ENCODE measurements at regions of chr4 and their contacts with region 1.

Region 1: DNA sequence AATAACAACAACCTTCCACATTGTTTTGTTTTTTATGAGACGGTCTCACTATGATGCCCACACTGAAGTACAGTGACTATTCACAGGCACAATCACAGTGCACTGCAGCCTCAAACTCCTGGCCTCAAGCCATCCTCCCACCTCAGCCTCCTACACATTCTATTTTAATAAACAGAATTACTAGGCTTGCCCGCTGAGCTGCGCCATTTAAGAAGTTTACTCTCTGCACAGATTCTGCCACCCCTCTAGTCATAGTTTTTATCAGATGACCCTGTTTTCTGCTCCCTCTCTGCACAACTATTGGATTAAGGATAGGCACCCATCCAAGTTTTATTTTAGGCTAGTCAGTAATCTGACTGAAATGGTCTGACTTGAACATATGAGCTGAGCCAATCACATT is 11.3 kb upstream of the COX18 start:
- DNase-seq: no peak
- ATAC-seq: no peak
- H3K4me3 Mint-ChIP-seq: no peak overlapping the region
- H3K27ac Mint-ChIP-seq: peak overlapping the region; percentile 11
- H3K4me1 Mint-ChIP-seq: peaks cover 4% of the 10 kb centered on the region
- H3K27me3 Mint-ChIP-seq: no peaks in the 10 kb centered on the region

Region 2: GRCh38 chr4:73069338-73070073 is 11.3 kb before region 1 on chr4 and contains the start of gene COX18:
- CTCF ChIA-PET with region 1: interaction called, 13 read pairs
- POLR2A ChIA-PET with region 1: interaction called, 10 read pairs
- DNase-seq: peak; percentile 96
- ATAC-seq: peak; percentile 84
- H3K4me3 Mint-ChIP-seq: peak within 1 kb of the TSS; percentile 83
- H3K27ac Mint-ChIP-seq: peak within 1 kb of the TSS; percentile 94
- H3K4me1 Mint-ChIP-seq: peaks cover 32% of the 10 kb centered on the region
- H3K27me3 Mint-ChIP-seq: no peaks in the 10 kb centered on the region
- total RNA-seq, gene COX18: 14.7 to 15.5 TPM

Measured in activated CD8-positive, alpha-beta T cell treated with anti-CD3 and anti-CD28 coated beads, Interleukin-2, amount 10 ng/mL, durations not matched to agents 7 days and 5 days (primary cell).